IMR-90 (cell line): ENCODE measurements at regions of chr16 and their contacts with region 1.

Region 1: GRCh38 chr16:70438969-70439862 is at the start of gene ST3GAL2:
- DNase-seq: peak; percentile 89
- ATAC-seq: peak; percentile 92
- H3K4me3 ChIP-seq: peak within 1 kb of the TSS; percentile 55
- H3K27ac ChIP-seq: peak within 1 kb of the TSS; percentile 73
- H3K4me1 ChIP-seq: peaks cover 11% of the 10 kb centered on the region
- H3K27me3 ChIP-seq: no peaks in the 10 kb centered on the region
- CTCF ChIP-seq: no peak
- POLR2A ChIP-seq: no peak
- RAD21 ChIP-seq: no peak
- total RNA-seq, gene ST3GAL2: 16.4 and 17.4 TPM in 2 replicates

Region 2: GRCh38 chr16:70428178-70428998 is 10.8 kb before region 1 on chr16:
- CTCF ChIA-PET with region 1: no interaction called
- POLR2A ChIA-PET with region 1: no interaction called
- dilution Hi-C with region 1: no loop called
- in situ Hi-C with region 1: no loop called
- intact Hi-C with region 1: loop called (anchors 1 kb)
- DNase-seq: peak; percentile 97
- ATAC-seq: peak; percentile 66
- H3K4me3 ChIP-seq: no peak overlapping the region
- H3K27ac ChIP-seq: peak overlapping the region; percentile 81
- H3K4me1 ChIP-seq: peaks cover 38% of the 10 kb centered on the region
- H3K27me3 ChIP-seq: no peaks in the 10 kb centered on the region
- CTCF ChIP-seq: no peak
- POLR2A ChIP-seq: peak; percentile 49; the same call in 1 of the 2 replicates
- RAD21 ChIP-seq: peak; percentile 27; the same call in 1 of the 2 replicates

Region 3: DNA sequence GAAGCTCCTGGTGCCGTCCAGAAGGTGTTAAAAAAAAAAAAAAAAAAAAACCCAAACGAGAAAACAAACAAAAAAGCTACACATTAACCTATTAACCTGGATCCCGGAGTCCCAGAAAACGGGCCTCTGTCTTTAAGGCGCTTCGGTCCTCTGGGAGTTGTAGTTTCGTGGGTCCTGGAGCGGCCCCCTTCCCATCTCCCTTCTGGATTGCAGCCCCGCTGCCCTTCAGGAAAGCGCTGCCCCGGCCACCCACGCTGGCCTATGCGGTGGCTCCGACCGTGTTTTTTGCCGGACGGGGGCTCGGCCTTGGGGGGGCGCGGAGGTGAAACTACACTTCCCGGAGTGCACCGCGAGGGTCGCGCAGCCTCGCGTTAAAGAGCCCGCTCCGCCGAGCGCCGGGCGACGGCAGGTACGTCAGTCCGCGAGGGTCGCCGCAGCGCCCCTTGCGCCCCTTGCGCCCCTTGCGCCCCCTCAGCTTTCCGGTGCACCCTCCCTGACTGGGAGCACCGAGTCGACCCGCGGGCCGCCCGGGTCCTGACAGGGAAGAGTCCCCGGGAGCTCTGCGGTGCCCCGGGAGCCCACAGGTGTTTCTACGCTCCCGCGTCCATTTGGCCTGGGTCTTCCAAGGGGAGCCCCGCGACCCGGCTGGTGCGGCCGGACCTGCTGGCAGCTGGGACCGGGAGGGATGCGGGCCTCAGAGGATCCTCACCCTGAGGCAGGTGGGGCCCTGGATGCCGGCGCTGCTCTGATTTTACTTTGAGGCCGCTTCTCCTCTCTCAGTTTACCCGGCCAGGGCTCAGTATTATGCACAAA is 15.2 kb after region 1 on chr16 and contains the start of gene FCSK:
- CTCF ChIA-PET with region 1: interaction called, 4 read pairs
- POLR2A ChIA-PET with region 1: interaction called, 22 read pairs
- dilution Hi-C with region 1: no loop called
- in situ Hi-C with region 1: no loop called
- intact Hi-C with region 1: no loop called
- DNase-seq: peak; percentile 60
- ATAC-seq: peak; percentile 96
- H3K4me3 ChIP-seq: peak within 1 kb of the TSS; percentile 79
- H3K27ac ChIP-seq: peak within 1 kb of the TSS; percentile 100
- H3K4me1 ChIP-seq: peaks cover 5% of the 10 kb centered on the region
- H3K27me3 ChIP-seq: no peaks in the 10 kb centered on the region
- CTCF ChIP-seq: no peak
- POLR2A ChIP-seq: no peak
- RAD21 ChIP-seq: no peak
- total RNA-seq, gene FCSK: 5.3 and 6.1 TPM in 2 replicates